Activated CD4-positive, alpha-beta T cell treated with anti-CD3 and anti-CD28 coated beads, Interleukin-2, amount 10 ng/mL, durations not matched to agents 24 days and 14 days (primary cell): ENCODE measurements at regions of chr5 and their contacts with region 1.

Region 1: GRCh38 chr5:140647042-140647341 is 438 bp downstream of the NDUFA2 start:
- DNase-seq: no peak
- H3K4me3 Mint-ChIP-seq: peak overlapping the region; percentile 94
- H3K27ac Mint-ChIP-seq: peak overlapping the region; percentile 98
- H3K4me1 Mint-ChIP-seq: peaks cover 28% of the 10 kb centered on the region
- H3K27me3 Mint-ChIP-seq: no peaks in the 10 kb centered on the region

Region 2: GRCh38 chr5:140362860-140363630 is 283.9 kb before region 1 on chr5:
- intact Hi-C with region 1: loop called (anchors 1 kb)
- DNase-seq: peak; percentile 96
- H3K4me3 Mint-ChIP-seq: peak overlapping the region; percentile 85
- H3K27ac Mint-ChIP-seq: peak overlapping the region; percentile 61
- H3K4me1 Mint-ChIP-seq: peaks cover 17% of the 10 kb centered on the region
- H3K27me3 Mint-ChIP-seq: no peaks in the 10 kb centered on the region

Region 3: DNA sequence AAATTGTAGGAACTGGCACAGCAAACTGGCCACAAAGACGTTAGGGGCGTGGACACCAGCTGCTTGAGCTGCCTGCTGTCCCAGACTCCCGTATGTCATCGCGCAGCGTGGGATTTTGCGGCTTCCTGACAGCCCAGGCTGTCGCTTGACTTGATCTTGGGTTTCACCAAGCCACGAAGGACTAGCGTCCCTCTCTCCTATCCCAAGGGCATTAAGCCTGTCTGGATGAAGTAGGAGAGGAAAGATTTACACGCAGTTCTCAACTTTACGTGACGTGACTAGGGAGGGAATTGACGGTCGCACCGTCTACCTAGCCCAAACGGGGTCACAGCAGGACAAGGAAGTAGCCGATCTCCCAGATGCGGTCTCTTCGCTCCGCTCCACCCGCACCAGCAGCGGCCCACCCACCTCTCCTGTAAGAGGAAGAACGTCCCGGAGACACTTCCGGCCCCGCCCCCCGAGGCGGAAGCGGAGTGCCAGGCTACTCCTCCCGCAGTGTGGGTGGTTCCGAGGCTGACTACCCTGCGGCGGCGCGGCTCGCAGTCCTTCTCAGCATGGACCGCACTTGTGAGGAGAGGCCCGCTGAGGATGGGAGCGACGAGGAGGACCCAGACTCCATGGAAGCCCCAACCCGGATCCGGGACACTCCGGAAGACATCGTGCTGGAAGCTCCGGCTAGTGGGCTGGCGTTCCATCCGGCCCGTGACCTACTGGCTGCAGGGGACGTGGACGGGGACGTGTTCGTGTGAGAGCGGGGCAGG is 17.5 kb after region 1 on chr5 and contains the start of gene WDR55:
- intact Hi-C with region 1: loop called (anchors 1 kb)
- DNase-seq: peak; percentile 99
- H3K4me3 Mint-ChIP-seq: peak within 1 kb of the TSS; percentile 100
- H3K27ac Mint-ChIP-seq: peak within 1 kb of the TSS; percentile 98
- H3K4me1 Mint-ChIP-seq: peaks cover 26% of the 10 kb centered on the region
- H3K27me3 Mint-ChIP-seq: no peaks in the 10 kb centered on the region
- total RNA-seq, gene WDR55: 41.6 and 42.9 TPM in 2 replicates

Region 4: DNA sequence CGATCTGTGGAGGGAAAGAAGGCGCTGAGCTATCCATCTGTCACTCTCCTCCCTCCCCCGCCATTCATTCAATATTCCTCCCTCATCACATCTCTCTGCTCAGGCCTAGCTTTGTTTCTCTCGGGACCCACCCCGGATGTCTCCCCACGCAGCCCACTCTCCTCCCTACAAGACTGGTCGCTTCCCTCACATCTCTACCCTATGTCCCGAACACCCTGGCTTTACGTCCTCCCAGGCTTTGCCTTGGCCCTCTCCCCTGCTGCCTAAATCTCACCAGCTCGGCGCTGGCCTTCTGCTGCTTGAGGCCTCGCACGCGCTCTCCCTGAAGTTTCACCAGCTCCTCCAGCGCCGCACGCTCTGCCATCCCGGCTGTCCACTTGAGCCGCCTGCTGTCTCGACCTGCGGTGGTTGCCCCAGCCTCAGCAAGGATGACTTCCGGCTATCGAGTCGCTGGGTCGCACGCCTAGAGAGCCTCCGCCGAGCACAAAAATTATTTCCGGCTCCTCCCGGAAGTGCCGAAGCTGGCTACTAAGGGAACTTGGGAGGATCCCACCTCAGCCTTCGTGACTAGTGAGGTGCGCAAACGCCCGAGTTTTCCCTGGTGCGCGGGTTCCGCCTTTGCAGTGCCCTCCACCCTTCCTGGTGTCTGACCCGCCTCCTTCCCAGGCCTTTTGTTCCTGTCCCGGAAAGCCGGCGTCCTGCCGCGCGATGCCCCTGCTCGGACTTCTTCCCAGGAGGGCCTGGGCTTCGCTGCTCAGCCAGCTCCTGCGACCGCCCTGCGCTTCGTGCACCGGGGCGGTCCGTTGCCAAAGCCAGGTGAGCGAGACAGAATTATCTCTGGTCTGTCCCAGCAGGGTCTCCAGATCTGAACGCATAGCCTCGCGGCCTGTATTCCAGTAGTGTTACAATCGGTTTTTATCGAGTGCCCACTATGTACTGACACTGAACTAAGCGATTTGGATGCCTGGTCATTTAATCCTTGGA is 44.2 kb after region 1 on chr5 and contains the starts of genes HARS1 and HARS2:
- intact Hi-C with region 1: loop called (anchors 1 kb)
- DNase-seq: peak; percentile 96
- H3K4me3 Mint-ChIP-seq: peak within 1 kb of the TSS; percentile 98
- H3K27ac Mint-ChIP-seq: peak within 1 kb of the TSS; percentile 98
- H3K4me1 Mint-ChIP-seq: peaks cover 30% of the 10 kb centered on the region
- H3K27me3 Mint-ChIP-seq: no peaks in the 10 kb centered on the region
- total RNA-seq, gene HARS1: 109 and 115 TPM in 2 replicates
- total RNA-seq, gene HARS2: 28.0 and 29.6 TPM in 2 replicates

Region 5: DNA sequence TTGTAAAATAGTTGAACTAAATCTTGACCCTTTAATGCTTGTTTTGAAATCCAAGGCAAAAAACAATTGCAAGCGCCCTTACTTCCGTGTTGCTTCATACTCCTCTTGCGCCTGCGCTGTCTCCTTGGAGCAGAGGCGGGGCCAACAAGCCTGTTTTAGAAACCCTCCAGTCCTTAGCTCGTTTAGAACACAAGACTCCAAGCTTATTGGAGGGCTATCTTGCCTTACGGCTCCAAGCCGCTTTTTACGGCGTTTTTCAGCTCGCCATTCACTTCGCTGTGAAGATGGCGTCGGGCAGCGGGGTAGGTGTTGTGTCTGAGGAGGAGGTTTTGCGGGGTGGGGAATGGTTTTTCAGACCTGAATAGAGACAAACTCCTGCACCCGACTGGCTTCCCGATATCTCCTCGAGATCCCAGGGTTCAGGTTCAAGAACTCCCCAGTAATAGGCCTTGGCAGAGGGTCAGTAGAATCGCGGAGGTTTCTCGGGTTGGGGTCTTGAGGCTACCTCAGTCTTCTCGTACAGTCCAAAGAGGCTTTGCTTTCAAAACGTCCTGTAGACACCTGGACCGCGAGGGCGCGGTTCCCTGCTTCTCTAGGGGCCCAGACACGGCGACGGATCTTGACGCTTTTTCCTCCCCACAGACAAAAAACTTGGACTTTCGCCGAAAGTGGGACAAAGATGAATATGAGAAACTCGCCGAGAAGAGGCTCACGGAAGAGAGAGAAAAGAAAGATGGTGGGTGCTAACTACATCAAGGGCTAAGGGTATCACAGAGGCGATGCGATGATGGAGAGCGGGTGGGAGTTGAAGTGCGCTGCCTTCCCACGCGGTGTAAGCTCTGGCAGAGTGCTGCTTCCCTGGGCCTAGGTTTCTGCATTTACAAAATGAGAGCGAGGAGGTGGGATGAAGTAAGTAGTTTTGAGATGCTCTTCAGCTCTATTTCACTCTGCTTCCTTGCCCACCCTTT is 53.5 kb after region 1 on chr5 and contains the start of gene ZMAT2:
- intact Hi-C with region 1: loop called (anchors 2 kb)
- DNase-seq: peak; percentile 98
- H3K4me3 Mint-ChIP-seq: peak within 1 kb of the TSS; percentile 99
- H3K27ac Mint-ChIP-seq: peak within 1 kb of the TSS; percentile 96
- H3K4me1 Mint-ChIP-seq: peaks cover 24% of the 10 kb centered on the region
- H3K27me3 Mint-ChIP-seq: no peaks in the 10 kb centered on the region
- total RNA-seq, gene ZMAT2: 67.1 and 67.2 TPM in 2 replicates